Ascending aorta (tissue), 2 donors: ENCODE measurements at regions of chr11 and their contacts with region 1.

Region 1: GRCh38 chr11:842370-843002 is at the starts of genes POLR2L and TSPAN4:
- DNase-seq: peak in 1 of 2 donors; percentile 93
- H3K4me3 ChIP-seq: peak within 1 kb of the TSS; percentile 94 to 98
- H3K27ac ChIP-seq: peak within 1 kb of the TSS; percentile 92 to 95
- H3K4me1 ChIP-seq: peaks cover 36 to 41% of the 10 kb centered on the region in 2 donors
- H3K27me3 ChIP-seq: no peaks in the 10 kb centered on the region
- CTCF ChIP-seq: no peak
- total RNA-seq, gene POLR2L: 141 TPM
- total RNA-seq, gene TSPAN4: 252 TPM

Region 2: DNA sequence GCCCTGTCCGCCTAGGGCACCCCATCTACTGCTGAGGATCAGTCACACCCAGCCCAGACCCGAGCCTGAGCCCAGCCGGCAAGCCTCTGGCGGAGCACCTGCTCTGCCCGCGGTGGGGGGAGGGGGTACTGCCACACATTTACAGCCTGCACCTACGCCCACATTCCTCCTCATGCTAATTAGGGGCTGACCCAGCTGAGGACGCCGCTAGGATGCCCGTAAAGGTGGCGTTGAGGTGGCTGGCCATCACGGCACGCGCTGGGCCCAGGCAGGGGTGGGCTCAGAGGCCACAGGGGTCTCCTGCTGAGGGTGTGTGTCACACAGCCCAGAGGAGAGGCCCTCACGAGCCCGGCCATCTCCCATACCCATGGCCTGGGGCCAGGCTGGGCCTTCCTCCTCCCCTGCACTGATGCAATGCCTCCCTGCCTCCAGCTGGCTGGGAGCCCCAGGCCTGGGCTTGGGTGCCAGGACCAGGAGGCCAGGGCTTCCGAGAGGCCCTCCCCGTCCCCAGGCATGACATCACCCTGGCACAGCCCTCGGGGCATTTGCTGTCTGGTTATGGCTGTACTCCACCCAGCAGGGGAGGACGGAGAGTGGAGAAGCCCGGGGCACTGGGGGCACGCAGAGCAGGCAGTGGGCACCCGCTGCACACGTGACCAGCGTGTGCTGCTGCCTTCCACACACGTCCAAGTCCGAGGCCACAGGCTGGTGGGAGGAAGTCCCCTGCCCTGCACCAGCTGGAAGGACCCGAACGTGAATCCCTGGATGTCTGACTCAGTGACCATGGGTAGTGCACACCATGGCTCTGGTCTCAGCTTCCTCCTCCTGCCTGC is 716.8 kb after region 1 on chr11:
- intact Hi-C with region 1: loop called (anchors 10 kb)
- DNase-seq: peak; percentile 90 to 99
- H3K4me3 ChIP-seq: peak overlapping the region; percentile 31 to 47
- H3K27ac ChIP-seq: peak overlapping the region; percentile 93 to 98
- H3K4me1 ChIP-seq: peaks cover 15 to 36% of the 10 kb centered on the region in 2 donors
- H3K27me3 ChIP-seq: no peaks in the 10 kb centered on the region
- CTCF ChIP-seq: peak in 1 of 3 experiments; percentile 21